ENCODE measurements at regions of chr10 and their contacts with region 1.

Region 1: DNA sequence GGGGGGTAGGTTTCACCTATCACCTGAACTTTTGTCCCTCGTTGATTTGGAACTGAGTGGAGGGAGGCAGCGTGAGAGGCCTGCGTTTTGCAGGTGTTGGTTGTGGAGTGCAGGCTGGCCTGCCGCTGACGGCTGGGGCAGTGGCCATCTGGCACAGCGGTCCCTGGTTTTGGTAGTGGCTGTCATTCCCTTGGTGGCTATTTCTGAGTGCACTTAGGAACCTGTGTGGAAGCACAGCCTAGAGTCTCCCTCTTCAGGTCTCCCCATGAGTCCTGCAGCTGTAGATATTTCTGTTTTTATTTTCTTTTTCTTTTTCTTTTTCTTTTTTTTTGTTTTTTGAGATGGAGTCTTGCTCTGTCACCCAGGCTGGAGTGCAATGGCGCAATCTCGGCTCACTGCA is 129.2 kb downstream of the CUL2 start:
- DNase-seq: peak; percentile 18
- H3K4me3 ChIP-seq: no peak overlapping the region
- H3K27ac ChIP-seq: no peak overlapping the region
- H3K4me1 ChIP-seq: no peaks in the 10 kb centered on the region
- H3K27me3 ChIP-seq: no peaks in the 10 kb centered on the region
- CTCF ChIP-seq: peak; percentile 18 to 48

Region 2: DNA sequence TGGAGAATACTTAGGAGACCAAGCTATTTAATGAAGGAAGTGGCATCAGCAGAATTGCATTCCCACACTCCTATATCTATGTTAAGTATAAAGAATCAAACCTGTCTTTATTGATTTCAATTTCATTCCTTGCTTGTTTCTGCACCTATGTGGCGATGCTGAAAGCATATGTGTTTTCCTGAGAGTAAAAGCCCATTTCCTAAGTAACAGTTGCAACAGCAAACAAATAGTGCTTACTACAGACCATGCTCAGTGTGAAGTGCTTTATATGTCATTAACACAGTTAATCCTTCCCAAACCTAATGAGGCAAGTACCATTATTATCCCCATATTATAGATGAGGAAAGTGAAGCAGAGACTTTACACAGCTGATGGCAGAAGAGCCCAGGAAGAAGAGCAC is 698.0 kb before region 1 on chr10:
- CTCF ChIA-PET with region 1: no interaction called
- dilution Hi-C with region 1: no loop called
- in situ Hi-C with region 1: no loop called
- intact Hi-C with region 1: loop called (anchors 5 kb)
- DNase-seq: no peak
- H3K4me3 ChIP-seq: no peak overlapping the region
- H3K27ac ChIP-seq: no peak overlapping the region
- H3K4me1 ChIP-seq: no peaks in the 10 kb centered on the region
- H3K27me3 ChIP-seq: no peaks in the 10 kb centered on the region
- CTCF ChIP-seq: peak in 1 of 2 donors; percentile 37

Region 3: GRCh38 chr10:34689053-34689452 is 271.9 kb before region 1 on chr10:
- CTCF ChIA-PET with region 1: no interaction called
- dilution Hi-C with region 1: no loop called
- in situ Hi-C with region 1: no loop called
- intact Hi-C with region 1: loop called (anchors 1 kb)
- DNase-seq: no peak
- H3K4me3 ChIP-seq: no peak overlapping the region
- H3K27ac ChIP-seq: no peak overlapping the region
- H3K4me1 ChIP-seq: peaks cover 6% of the 10 kb centered on the region
- H3K27me3 ChIP-seq: no peaks in the 10 kb centered on the region
- CTCF ChIP-seq: no peak

Region 4: GRCh38 chr10:34906067-34906965 is 54.7 kb before region 1 on chr10:
- CTCF ChIA-PET with region 1: no interaction called
- dilution Hi-C with region 1: loop called (anchors 5 kb)
- in situ Hi-C with region 1: no loop called
- intact Hi-C with region 1: no loop called
- DNase-seq: peak; percentile 93
- H3K4me3 ChIP-seq: no peak overlapping the region
- H3K27ac ChIP-seq: peak overlapping the region; percentile 21
- H3K4me1 ChIP-seq: peaks cover 23% of the 10 kb centered on the region
- H3K27me3 ChIP-seq: no peaks in the 10 kb centered on the region
- CTCF ChIP-seq: no peak

Region 5: DNA sequence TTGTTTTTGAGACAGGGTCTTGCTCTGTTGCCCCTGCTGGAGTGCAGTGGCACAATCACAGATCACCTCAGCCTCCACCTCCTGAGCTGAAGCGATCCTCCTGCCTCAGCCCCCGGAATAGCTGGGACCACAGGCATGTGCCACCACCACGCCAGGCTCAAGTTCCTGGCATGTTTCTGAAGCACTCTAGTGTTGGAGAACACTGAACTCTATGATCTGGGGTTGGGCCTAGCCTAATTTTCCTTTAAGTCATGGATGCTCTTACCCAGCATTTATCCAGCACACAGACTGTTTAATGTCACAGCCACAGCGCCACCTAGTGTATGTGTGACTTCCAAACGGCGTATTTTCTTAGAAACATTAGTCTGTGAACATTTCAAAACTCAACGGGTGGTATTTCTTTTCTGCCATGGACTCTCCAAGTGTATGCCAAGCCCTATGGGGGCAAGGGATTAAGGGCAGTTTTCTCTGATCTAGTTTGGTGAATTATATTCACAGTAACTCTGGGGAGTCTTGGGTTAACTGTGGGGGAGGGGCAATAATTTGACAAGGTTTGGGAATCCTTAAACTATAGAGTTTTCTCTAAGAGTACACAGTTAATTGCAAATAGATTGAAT is 257.5 kb after region 1 on chr10:
- CTCF ChIA-PET with region 1: no interaction called
- dilution Hi-C with region 1: no loop called
- in situ Hi-C with region 1: no loop called
- intact Hi-C with region 1: no loop called
- DNase-seq: peak; percentile 65
- H3K4me3 ChIP-seq: no peak overlapping the region
- H3K27ac ChIP-seq: no peak overlapping the region
- H3K4me1 ChIP-seq: no peaks in the 10 kb centered on the region
- H3K27me3 ChIP-seq: no peaks in the 10 kb centered on the region
- CTCF ChIP-seq: peak; percentile 74 to 77

Region 6: DNA sequence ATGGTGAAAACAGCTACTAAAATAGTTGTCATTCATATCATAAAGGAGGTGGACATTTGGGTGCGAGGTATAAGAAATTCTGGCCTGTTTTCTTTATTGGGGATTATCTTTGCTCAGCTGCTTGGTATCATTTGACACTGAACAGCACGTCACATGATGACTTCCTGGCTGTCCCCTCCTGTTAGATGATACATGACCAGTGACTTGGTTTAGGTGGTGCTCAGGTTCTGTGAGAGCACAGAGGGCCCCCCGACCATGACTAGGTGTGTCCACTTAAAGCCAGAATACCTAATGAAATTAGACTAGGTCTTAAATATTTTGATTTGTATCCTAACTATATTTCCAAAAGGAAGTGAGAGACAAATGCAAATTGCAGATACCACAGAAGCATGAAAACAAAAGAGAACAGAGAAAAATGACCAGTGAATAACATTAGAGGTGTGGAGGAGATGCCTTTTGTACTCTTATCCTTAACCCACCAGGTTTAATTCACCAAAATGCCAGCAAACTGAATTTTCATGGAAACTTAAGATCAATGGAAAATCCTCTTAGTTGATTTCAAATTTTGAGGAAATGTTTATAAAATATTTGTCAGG is 593.6 kb after region 1 on chr10:
- CTCF ChIA-PET with region 1: no interaction called
- dilution Hi-C with region 1: no loop called
- in situ Hi-C with region 1: no loop called
- intact Hi-C with region 1: no loop called
- DNase-seq: no peak
- H3K4me3 ChIP-seq: no peak overlapping the region
- H3K27ac ChIP-seq: no peak overlapping the region
- H3K4me1 ChIP-seq: peaks cover 13% of the 10 kb centered on the region
- H3K27me3 ChIP-seq: no peaks in the 10 kb centered on the region
- CTCF ChIP-seq: no peak